ENCODE measurements at regions of chr2 and their contacts with region 1.

Region 1: DNA sequence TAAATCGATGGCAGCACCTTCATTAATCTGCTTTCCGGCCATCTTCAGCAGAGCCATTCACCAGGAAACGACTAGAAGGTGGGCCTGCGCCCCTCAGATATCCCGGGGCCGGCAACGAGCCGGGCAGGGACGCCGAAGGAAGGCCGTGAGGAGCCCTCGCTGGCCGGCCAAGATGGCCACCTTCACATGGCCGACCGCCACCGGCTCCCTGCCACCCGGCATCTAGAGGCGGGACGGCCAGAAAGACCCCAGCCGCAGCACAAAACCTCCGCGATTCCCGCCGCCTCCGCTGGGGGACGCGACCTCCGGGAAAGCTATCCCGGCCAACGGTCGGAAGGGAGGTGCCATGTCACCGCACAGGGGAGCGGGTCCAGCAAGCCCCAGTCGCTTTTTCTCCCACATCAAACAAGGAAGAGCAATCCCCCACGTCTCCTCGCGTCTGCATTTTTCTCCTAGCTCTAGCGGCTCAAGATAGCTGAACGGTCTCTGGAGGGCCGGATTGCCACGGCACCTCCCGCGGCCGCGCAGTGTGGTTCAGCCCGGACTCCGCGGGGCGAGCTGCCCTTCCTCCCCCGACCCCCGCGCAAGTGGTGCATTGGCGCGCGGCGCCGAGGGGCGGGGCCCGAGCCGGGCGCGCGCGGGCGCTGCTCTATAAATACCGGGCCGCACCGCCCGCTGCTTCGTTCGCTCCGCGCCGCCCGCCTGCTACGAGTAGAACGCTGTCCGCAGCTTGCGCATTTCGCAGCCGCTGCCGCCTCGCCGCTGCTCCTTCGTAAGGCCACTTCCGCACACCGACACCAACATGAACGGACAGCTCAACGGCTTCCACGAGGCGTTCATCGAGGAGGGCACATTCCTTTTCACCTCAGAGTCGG is at the start of gene MAT2A:
- DNase-seq: peak; percentile 97 to 99
- H3K4me3 ChIP-seq: peak within 1 kb of the TSS; percentile 98
- H3K4me3 Mint-ChIP-seq: peak within 1 kb of the TSS; percentile 97
- H3K27ac Mint-ChIP-seq: peak within 1 kb of the TSS; percentile 99
- H3K4me1 ChIP-seq: peaks cover 6% of the 10 kb centered on the region
- H3K4me1 Mint-ChIP-seq: peaks cover 34% of the 10 kb centered on the region
- H3K27me3 ChIP-seq: no peaks in the 10 kb centered on the region
- H3K27me3 Mint-ChIP-seq: no peaks in the 10 kb centered on the region
- CTCF ChIP-seq: peak; percentile 81 to 85
- total RNA-seq, gene MAT2A: 217 and 250 TPM in 2 replicates

Region 2: DNA sequence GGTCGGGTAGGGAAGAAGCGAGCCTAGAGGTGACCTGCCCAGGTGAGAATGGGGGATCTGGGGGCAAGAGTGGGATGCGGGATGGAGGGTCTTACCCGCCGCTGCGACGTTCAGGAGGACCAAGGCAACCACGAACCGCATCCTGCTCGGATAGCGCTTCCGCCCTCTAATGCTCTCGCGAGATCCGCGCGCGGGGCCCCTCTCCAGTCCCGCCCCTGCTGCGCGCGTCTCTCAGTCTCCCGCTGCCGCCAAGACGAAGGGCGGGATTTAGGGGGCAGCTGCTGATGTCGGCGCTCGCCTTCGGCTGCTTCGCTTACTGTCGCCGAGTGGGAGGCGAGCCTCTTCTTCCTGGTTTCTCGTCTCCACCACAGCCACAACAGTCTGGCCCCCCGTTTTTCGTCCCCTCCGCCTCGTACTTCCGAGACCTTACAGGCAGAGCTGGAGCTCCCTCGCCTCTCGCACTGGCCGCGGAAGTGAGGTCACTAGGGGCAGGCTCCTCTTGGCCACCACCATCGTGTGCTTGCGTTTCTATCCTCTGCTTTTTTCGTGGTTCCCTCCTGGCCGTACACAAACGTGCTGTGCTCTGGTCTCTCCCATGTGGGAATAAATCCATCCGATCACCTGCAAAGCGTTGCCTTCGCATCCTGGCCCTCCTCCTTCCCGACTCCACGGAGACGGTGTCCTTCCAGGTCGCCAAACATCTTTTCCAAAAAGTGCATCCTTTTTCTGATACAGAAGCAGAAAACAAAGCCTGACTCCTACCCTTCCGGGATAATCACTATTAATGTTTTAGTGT is 210.7 kb before region 1 on chr2 and contains the start of gene TGOLN2:
- CTCF ChIA-PET with region 1: no interaction called
- POLR2A ChIA-PET with region 1: interaction called, 7 read pairs
- intact Hi-C with region 1: loop called (anchors 5 kb)
- DNase-seq: peak; percentile 91 to 94
- H3K4me3 ChIP-seq: peak within 1 kb of the TSS; percentile 93
- H3K4me3 Mint-ChIP-seq: peak within 1 kb of the TSS; percentile 86
- H3K27ac Mint-ChIP-seq: peak within 1 kb of the TSS; percentile 97
- H3K4me1 ChIP-seq: peaks cover 25% of the 10 kb centered on the region
- H3K4me1 Mint-ChIP-seq: peaks cover 22% of the 10 kb centered on the region
- H3K27me3 ChIP-seq: no peaks in the 10 kb centered on the region
- H3K27me3 Mint-ChIP-seq: no peaks in the 10 kb centered on the region
- CTCF ChIP-seq: peak in 1 of 2 experiments; percentile 14
- total RNA-seq, gene TGOLN2: 109 and 119 TPM in 2 replicates

Region 3: DNA sequence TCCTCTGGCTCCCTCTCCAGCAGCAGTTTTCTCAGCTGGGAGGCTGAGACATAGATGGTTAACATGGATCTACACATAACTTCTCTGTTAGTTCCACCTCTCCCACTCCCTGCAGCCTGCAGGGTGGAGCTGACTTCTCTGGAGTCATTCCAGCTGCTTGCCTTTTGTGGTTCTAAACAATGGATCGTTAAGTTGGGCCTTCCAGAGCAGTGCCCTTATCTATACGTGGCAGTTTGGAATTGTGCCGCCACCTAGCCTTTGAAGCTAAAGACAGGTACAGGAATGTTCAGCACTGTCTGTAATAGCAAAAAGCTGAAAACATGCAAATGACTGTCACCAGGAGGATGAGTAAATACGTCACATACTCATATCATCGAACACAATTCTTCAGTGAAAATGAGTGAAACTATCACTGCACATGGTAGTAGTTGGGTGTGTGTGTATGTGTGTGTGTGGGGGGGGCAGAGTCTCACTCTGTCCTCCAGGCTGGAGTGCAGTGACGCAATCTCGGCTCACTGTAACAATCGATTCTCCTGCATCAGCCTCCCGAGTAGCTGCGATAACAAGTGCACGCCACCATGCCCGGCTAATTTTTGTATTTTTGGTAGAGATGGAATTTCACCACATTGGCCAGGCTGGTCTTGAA is 69.9 kb before region 1 on chr2:
- CTCF ChIA-PET with region 1: interaction called, 6 read pairs
- POLR2A ChIA-PET with region 1: interaction called, 12 read pairs
- intact Hi-C with region 1: loop called (anchors 1 kb)
- DNase-seq: peak; percentile 70 to 86
- H3K4me3 ChIP-seq: no peak overlapping the region
- H3K4me3 Mint-ChIP-seq: peak overlapping the region; percentile 20
- H3K27ac Mint-ChIP-seq: peak overlapping the region; percentile 82
- H3K4me1 ChIP-seq: peaks cover 18% of the 10 kb centered on the region
- H3K4me1 Mint-ChIP-seq: peaks cover 23% of the 10 kb centered on the region
- H3K27me3 ChIP-seq: no peaks in the 10 kb centered on the region
- H3K27me3 Mint-ChIP-seq: no peaks in the 10 kb centered on the region
- CTCF ChIP-seq: no peak

Region 4: DNA sequence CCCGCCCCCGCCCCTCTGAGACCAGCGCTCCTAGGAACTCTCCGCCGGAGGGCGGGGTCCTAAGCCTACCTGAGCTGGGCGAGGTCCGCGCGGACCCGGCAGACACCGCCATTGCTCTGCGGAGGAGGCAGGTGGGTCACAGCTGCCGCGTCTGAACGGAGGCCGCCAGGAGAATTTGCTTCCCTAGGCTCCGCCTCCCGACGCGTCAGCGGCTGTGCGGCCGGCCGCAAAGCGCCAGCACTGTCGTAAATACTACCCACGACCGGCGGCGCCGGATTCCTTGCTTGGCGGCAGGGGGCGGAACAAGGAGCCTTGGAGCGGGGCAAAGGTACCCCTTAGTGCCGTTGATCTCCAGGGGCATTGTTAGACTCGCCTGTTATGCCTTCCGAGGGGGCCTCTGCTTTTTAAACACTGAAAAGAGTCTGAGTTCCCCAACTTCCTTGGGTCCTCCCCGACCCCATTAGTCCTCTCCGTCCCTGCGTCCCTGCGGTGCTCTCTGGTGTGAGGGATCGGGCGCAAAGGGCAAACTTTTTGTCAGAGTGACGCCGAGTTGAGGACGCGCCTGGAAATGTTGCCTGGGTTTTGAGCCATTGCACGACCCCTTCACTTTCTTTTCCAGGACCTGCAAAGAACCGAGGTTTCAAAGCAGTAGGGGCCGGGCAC is 22.7 kb after region 1 on chr2 and contains the start of gene GGCX:
- CTCF ChIA-PET with region 1: interaction called, 6 read pairs
- POLR2A ChIA-PET with region 1: interaction called, 19 read pairs
- intact Hi-C with region 1: loop called (anchors 1 kb)
- DNase-seq: peak; percentile 96 to 97
- H3K4me3 ChIP-seq: peak within 1 kb of the TSS; percentile 65
- H3K4me3 Mint-ChIP-seq: peak within 1 kb of the TSS; percentile 96
- H3K27ac Mint-ChIP-seq: peak within 1 kb of the TSS; percentile 98
- H3K4me1 ChIP-seq: peaks cover 34% of the 10 kb centered on the region
- H3K4me1 Mint-ChIP-seq: peaks cover 26% of the 10 kb centered on the region
- H3K27me3 ChIP-seq: no peaks in the 10 kb centered on the region
- H3K27me3 Mint-ChIP-seq: no peaks in the 10 kb centered on the region
- CTCF ChIP-seq: no peak
- total RNA-seq, gene GGCX: 85.1 and 96.8 TPM in 2 replicates

Region 5: GRCh38 chr2:85611705-85612587 is 73.2 kb after region 1 on chr2 and contains the start of gene C2orf68:
- CTCF ChIA-PET with region 1: interaction called, 3 read pairs
- POLR2A ChIA-PET with region 1: interaction called, 10 read pairs
- intact Hi-C with region 1: no loop called
- DNase-seq: peak; percentile 94 to 95
- H3K4me3 ChIP-seq: peak within 1 kb of the TSS; percentile 74
- H3K4me3 Mint-ChIP-seq: peak within 1 kb of the TSS; percentile 90
- H3K27ac Mint-ChIP-seq: peak within 1 kb of the TSS; percentile 86
- H3K4me1 ChIP-seq: no peaks in the 10 kb centered on the region
- H3K4me1 Mint-ChIP-seq: no peaks in the 10 kb centered on the region
- H3K27me3 ChIP-seq: no peaks in the 10 kb centered on the region
- H3K27me3 Mint-ChIP-seq: no peaks in the 10 kb centered on the region
- CTCF ChIP-seq: no peak
- total RNA-seq, gene C2orf68: 49.0 and 54.5 TPM in 2 replicates